Activated CD8-positive, alpha-beta T cell treated with anti-CD3 and anti-CD28 coated beads for 36 hours (primary cell): ENCODE measurements at regions of chr12 and their contacts with region 1.

Region 1: GRCh38 chr12:12736759-12737676 is 19.9 kb downstream of the CDKN1B start:
- DNase-seq: peak; percentile 77
- ATAC-seq: peak; percentile 92
- H3K4me3 Mint-ChIP-seq: peak overlapping the region; percentile 70
- H3K27ac Mint-ChIP-seq: peak overlapping the region; percentile 89
- H3K4me1 Mint-ChIP-seq: peaks cover 42% of the 10 kb centered on the region
- H3K27me3 Mint-ChIP-seq: no peaks in the 10 kb centered on the region
- CTCF ChIP-seq: peak; percentile 79

Region 2: DNA sequence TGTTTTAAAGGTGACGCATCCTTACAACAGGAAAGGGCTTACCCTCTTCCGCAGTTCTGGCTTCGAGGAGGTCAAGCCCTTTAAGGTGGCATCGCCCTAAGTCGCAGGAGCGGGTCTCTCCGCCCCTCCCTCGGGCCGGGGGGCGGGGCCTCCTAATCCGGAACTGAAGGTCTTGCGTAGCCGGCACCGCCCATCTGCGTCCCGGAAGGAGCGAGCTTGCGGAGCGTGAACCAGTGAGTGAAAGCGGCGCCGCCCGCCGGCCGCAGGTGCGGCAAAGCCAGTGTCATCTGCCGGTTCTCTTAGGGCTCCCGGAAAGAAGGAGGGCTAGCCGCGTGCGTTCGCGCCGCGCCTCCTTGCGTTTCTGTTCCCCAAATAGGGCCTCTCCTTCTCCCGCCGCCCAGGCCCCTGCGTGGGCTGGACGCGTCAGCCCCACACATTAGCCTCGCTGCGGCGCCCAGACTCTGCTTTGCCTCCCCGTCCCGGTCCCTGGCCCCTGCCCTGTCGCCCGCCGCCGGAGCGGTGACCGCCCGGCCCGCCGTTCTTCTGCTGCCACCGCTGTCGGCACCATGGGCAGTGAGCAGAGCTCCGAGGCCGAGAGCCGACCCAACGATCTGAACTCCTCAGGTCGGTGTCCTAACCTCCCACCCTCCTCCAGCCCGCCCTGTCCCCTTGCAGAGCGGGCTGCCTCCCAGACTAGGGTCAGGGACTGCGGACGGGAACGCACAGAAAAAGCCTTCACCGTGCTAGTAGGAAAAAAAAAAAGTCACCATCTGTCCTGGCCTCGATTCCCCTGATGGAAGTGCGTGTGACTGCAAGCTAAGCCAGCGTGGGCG is 379.9 kb before region 1 on chr12 and contains the start of gene BORCS5:
- CTCF ChIA-PET with region 1: interaction called, 10 read pairs
- POLR2A ChIA-PET with region 1: interaction called, 3 read pairs
- intact Hi-C with region 1: no loop called
- DNase-seq: peak; percentile 99
- ATAC-seq: peak; percentile 97
- H3K4me3 Mint-ChIP-seq: peak within 1 kb of the TSS; percentile 91
- H3K27ac Mint-ChIP-seq: peak within 1 kb of the TSS; percentile 95
- H3K4me1 Mint-ChIP-seq: peaks cover 32% of the 10 kb centered on the region
- H3K27me3 Mint-ChIP-seq: no peaks in the 10 kb centered on the region
- CTCF ChIP-seq: peak; percentile 21
- total RNA-seq, gene BORCS5: 31.5 to 32.9 TPM

Region 3: GRCh38 chr12:12628013-12628412 is 109.0 kb before region 1 on chr12:
- CTCF ChIA-PET with region 1: interaction called, 18 read pairs
- POLR2A ChIA-PET with region 1: no interaction called
- intact Hi-C with region 1: no loop called
- DNase-seq: peak; percentile 27
- ATAC-seq: no peak
- H3K4me3 Mint-ChIP-seq: no peak overlapping the region
- H3K27ac Mint-ChIP-seq: no peak overlapping the region
- H3K4me1 Mint-ChIP-seq: peaks cover 75% of the 10 kb centered on the region
- H3K27me3 Mint-ChIP-seq: no peaks in the 10 kb centered on the region
- CTCF ChIP-seq: no peak

Region 4: DNA sequence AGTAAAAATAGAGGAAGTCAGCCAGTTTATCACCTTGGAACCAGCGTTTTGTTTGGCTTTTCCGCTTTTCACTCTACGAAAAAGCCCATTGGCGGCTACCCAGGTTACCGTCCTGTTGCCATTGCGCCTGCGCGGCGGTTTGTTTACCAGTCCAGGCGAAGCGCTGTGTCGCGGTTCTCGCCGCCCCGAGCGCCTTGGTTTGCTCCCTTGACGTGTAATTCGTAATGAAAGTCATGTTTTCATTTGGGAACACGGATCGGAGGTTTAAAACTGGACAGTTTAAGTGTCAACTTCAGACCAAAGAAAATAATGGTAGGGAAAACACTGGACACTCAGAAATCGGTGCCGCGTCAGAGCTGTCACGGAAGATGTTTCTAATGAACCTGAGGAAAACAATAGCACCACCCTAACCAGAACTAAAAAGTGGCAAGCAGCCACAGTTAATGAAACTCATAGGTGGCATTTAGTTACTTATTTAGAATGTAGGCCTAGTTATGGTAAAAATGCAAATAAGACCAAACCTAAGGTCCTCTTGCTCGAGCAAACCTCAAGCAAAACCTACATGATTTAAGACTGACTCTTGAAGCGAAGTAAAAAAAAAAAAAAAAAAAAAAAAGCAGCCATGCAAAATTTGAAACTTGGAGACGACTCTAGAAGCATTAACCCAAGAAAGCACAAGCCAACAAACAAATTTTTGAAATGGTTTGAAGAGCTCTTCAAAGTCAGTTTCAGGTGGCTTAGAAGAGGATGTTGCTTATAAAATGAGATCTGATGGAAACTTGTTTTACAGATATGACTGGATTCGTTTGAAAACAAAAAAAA is 40.2 kb before region 1 on chr12:
- CTCF ChIA-PET with region 1: interaction called, 25 read pairs
- POLR2A ChIA-PET with region 1: interaction called, 10 read pairs
- intact Hi-C with region 1: no loop called
- DNase-seq: peak; percentile 91
- ATAC-seq: peak; percentile 77
- H3K4me3 Mint-ChIP-seq: peak overlapping the region; percentile 87
- H3K27ac Mint-ChIP-seq: peak overlapping the region; percentile 99
- H3K4me1 Mint-ChIP-seq: peaks cover 37% of the 10 kb centered on the region
- H3K27me3 Mint-ChIP-seq: no peaks in the 10 kb centered on the region
- CTCF ChIP-seq: no peak

Region 5: DNA sequence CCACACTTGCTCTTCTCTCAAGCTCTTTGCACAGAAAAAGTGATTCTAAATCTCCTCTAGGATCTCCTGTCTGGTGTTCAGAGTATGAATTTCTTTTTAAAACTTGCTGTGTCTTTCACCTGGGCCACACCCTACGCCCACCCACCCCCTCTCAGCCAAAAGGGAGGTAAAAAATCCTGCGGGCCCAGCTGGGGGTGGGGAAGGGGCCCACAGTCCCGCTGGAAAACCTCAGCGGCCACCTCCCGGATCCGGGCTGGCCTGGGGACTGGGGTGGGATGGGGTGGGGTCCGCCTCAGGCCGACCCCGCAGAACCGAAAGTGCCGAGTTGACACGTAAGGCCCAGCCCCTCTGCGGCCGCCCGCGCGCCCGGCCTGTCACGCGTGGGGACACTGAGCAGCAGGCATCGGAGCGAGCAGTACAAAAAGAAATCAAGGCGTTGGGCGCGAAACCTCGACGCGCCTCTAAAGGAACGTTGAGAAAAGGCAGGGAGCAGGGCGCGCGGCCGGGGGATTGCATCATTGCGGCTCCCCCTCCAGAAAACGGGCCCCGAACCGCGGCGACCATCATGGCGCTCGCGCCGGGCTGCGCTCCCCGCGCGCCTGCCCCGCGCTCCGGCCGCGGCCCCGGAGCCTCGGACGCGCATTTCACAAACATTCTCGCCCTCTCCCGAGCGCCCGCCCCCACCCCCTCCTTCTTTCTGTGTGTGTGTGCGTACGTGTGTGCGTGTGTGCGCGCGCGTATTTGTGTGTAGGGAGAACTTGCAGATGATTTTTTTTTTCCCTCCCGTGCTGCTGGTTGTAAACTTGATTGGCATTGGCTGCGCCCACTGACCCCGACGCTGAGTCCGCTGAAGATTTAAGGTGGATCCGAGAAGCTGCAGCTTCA is 12.1 kb before region 1 on chr12:
- CTCF ChIA-PET with region 1: interaction called, 55 read pairs
- POLR2A ChIA-PET with region 1: interaction called, 77 read pairs
- intact Hi-C with region 1: no loop called
- DNase-seq: peak; percentile 96
- ATAC-seq: peak; percentile 61
- H3K4me3 Mint-ChIP-seq: peak overlapping the region; percentile 86
- H3K27ac Mint-ChIP-seq: peak overlapping the region; percentile 99
- H3K4me1 Mint-ChIP-seq: peaks cover 44% of the 10 kb centered on the region
- H3K27me3 Mint-ChIP-seq: no peaks in the 10 kb centered on the region
- CTCF ChIP-seq: no peak

Region 6: GRCh38 chr12:12813120-12814101 is 76.4 kb after region 1 on chr12 and contains the start of gene DDX47:
- CTCF ChIA-PET with region 1: interaction called, 19 read pairs
- POLR2A ChIA-PET with region 1: no interaction called
- intact Hi-C with region 1: no loop called
- DNase-seq: peak; percentile 99
- ATAC-seq: peak; percentile 94
- H3K4me3 Mint-ChIP-seq: peak within 1 kb of the TSS; percentile 99
- H3K27ac Mint-ChIP-seq: peak within 1 kb of the TSS; percentile 93
- H3K4me1 Mint-ChIP-seq: peaks cover 58% of the 10 kb centered on the region
- H3K27me3 Mint-ChIP-seq: no peaks in the 10 kb centered on the region
- CTCF ChIP-seq: peak; percentile 90
- total RNA-seq, gene DDX47: 86.0 to 96.9 TPM

Region 7: DNA sequence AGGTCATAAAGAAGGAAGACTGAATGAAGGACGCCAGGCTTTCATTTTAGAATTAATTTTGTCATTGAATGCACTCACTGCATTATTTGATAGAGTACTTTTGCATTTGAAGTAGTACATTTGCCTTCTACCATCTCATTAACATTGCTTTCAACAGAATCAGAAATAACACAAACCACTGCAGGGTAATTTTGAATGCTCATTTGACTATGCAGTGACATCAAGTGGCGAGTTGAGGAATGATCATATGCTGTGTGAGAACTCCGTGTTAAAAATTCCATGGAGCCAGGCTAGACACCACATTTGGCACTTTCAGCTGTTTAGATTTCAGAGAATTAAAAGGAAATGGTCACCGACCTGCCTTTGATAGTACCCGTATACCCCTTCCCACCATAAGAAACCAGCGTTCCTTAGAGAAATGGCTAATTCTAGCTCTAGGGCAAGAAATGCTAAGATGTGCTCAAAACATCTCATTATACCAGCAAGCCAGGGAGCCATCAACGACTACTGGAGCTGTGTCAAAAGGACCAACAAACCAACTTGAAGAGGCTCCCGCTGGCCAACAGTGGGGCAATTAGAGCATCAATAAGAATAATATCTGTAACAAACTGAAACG is 246.5 kb after region 1 on chr12:
- CTCF ChIA-PET with region 1: no interaction called
- POLR2A ChIA-PET with region 1: no interaction called
- intact Hi-C with region 1: no loop called
- DNase-seq: no peak
- ATAC-seq: no peak
- H3K4me3 Mint-ChIP-seq: no peak overlapping the region
- H3K27ac Mint-ChIP-seq: no peak overlapping the region
- H3K4me1 Mint-ChIP-seq: no peaks in the 10 kb centered on the region
- H3K27me3 Mint-ChIP-seq: no peaks in the 10 kb centered on the region
- CTCF ChIP-seq: peak; percentile 59